IMR-90 (cell line): ENCODE measurements at regions of chr14 and their contacts with region 1.

Region 1: DNA sequence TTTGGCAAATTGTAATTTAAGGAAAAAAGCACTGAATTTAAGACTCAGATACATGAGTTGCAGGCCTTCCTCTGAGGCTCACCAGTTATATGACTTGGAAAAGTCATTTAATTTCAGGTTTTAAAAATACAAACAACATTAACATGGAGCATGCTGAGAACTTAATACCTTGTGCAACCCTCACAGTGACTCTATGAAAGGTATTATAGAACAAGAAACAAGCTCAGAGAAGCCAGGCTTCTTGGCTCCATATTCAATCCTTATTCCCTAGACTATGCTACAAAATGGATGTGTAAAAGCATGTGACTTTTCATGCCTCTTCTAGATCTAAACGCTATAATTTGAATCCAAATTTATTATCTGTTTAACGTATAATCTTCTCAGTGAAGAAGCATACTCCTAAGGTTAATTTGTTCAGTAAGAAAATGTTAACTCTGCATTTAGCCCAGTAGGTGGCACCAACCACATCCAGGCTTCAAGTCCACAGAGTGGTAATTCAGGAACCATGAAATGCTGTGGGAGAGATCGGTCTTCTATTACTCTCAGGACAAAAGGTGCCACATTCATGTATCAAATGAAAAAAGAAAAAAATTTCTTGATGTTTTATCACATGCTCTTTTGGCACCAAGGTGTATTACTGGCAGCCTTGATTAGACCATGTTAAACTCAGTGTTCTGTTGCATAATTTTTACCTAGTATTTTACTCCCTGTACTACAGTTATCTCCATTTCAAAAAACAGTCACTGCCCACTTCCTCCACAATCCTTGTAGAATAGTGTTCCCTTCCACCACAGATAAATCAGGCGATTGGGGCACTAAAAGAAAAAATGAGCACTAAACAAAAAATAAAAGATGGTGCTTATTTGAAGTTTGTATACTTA is 9.3 kb downstream of the CCDC196 start:
- DNase-seq: peak; percentile 71
- ATAC-seq: peak; percentile 97
- H3K4me3 ChIP-seq: no peak overlapping the region
- H3K27ac ChIP-seq: no peak overlapping the region
- H3K4me1 ChIP-seq: peaks cover 2% of the 10 kb centered on the region; the same call in 1 of the 2 replicates
- H3K27me3 ChIP-seq: no peaks in the 10 kb centered on the region; the same call in 1 of the 2 replicates
- CTCF ChIP-seq: peak; percentile 77
- POLR2A ChIP-seq: no peak
- RAD21 ChIP-seq: peak; percentile 69

Region 2: GRCh38 chr14:66662374-66662773 is 166.9 kb after region 1 on chr14:
- CTCF ChIA-PET with region 1: no interaction called
- POLR2A ChIA-PET with region 1: no interaction called
- dilution Hi-C with region 1: no loop called
- in situ Hi-C with region 1: no loop called
- intact Hi-C with region 1: loop called (anchors 5 kb)
- DNase-seq: no peak
- ATAC-seq: peak; percentile 53; the same call in 1 of the 2 replicates
- H3K4me3 ChIP-seq: no peak overlapping the region
- H3K27ac ChIP-seq: no peak overlapping the region
- H3K4me1 ChIP-seq: no peaks in the 10 kb centered on the region
- H3K27me3 ChIP-seq: no peaks in the 10 kb centered on the region
- CTCF ChIP-seq: peak; percentile 32
- POLR2A ChIP-seq: no peak
- RAD21 ChIP-seq: peak; percentile 31

Region 3: GRCh38 chr14:66746316-66747006 is 251.0 kb after region 1 on chr14:
- CTCF ChIA-PET with region 1: no interaction called
- POLR2A ChIA-PET with region 1: no interaction called
- dilution Hi-C with region 1: no loop called
- in situ Hi-C with region 1: no loop called
- intact Hi-C with region 1: loop called (anchors 5 kb)
- DNase-seq: peak; percentile 58
- ATAC-seq: peak; percentile 63
- H3K4me3 ChIP-seq: no peak overlapping the region
- H3K27ac ChIP-seq: no peak overlapping the region
- H3K4me1 ChIP-seq: no peaks in the 10 kb centered on the region
- H3K27me3 ChIP-seq: no peaks in the 10 kb centered on the region
- CTCF ChIP-seq: peak; percentile 52
- POLR2A ChIP-seq: no peak
- RAD21 ChIP-seq: peak; percentile 40

Region 4: GRCh38 chr14:67111022-67111421 is 615.6 kb after region 1 on chr14:
- CTCF ChIA-PET with region 1: no interaction called
- POLR2A ChIA-PET with region 1: no interaction called
- dilution Hi-C with region 1: no loop called
- in situ Hi-C with region 1: loop called (anchors 10 kb)
- intact Hi-C with region 1: loop called (anchors 5 kb)
- DNase-seq: no peak
- ATAC-seq: no peak
- H3K4me3 ChIP-seq: no peak overlapping the region
- H3K27ac ChIP-seq: no peak overlapping the region
- H3K4me1 ChIP-seq: no peaks in the 10 kb centered on the region
- H3K27me3 ChIP-seq: no peaks in the 10 kb centered on the region
- CTCF ChIP-seq: no peak
- POLR2A ChIP-seq: no peak
- RAD21 ChIP-seq: no peak

Region 5: DNA sequence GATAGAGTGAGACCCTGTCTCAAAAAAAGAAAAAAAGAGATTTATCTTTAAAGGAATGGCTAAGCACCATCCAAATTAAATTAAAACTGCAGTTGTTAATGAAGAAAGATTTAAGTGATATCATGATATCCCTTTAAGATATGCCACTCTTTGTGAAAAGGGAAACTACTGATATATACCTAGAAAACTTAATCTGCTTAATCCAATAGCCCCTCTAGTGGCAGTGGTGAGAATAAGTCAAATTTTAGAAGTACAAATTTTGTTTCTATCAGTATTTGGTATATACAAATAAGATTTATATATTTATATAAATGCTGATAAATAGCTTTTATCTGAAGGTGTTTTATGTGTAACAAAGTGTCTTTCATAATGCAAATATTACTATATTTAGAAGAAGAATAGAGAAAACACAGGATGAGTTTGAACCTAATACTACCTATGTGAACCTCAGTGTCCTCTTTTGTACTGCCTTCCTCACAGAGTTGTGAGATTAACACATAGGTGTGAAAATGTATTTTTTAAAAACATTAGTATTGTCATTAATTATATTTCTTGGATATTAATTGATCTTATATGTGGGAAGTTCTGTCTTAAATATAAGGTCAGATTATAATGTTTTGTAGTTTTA is 642.4 kb after region 1 on chr14:
- CTCF ChIA-PET with region 1: no interaction called
- POLR2A ChIA-PET with region 1: no interaction called
- dilution Hi-C with region 1: no loop called
- in situ Hi-C with region 1: no loop called
- intact Hi-C with region 1: loop called (anchors 5 kb)
- DNase-seq: peak; percentile 22
- ATAC-seq: no peak
- H3K4me3 ChIP-seq: no peak overlapping the region
- H3K27ac ChIP-seq: no peak overlapping the region
- H3K4me1 ChIP-seq: no peaks in the 10 kb centered on the region
- H3K27me3 ChIP-seq: no peaks in the 10 kb centered on the region
- CTCF ChIP-seq: peak; percentile 57
- POLR2A ChIP-seq: no peak
- RAD21 ChIP-seq: peak; percentile 54

Region 6: GRCh38 chr14:67285876-67286452 is 790.5 kb after region 1 on chr14:
- CTCF ChIA-PET with region 1: no interaction called
- POLR2A ChIA-PET with region 1: no interaction called
- dilution Hi-C with region 1: no loop called
- in situ Hi-C with region 1: loop called (anchors 25 kb)
- intact Hi-C with region 1: loop called (anchors 10 kb)
- DNase-seq: peak; percentile 64
- ATAC-seq: peak; percentile 24; the same call in 1 of the 2 replicates
- H3K4me3 ChIP-seq: no peak overlapping the region
- H3K27ac ChIP-seq: no peak overlapping the region
- H3K4me1 ChIP-seq: no peaks in the 10 kb centered on the region
- H3K27me3 ChIP-seq: no peaks in the 10 kb centered on the region
- CTCF ChIP-seq: peak; percentile 69
- POLR2A ChIP-seq: no peak
- RAD21 ChIP-seq: peak; percentile 65